CD4-positive, alpha-beta memory T cell (primary cell): ENCODE measurements at regions of chr11 and their contacts with region 1.

Region 1: GRCh38 chr11:10792398-10792975 is 16.2 kb downstream of the EIF4G2 start:
- DNase-seq: peak; percentile 71 to 81 (median 72)
- H3K4me3 ChIP-seq: no peak overlapping the region
- H3K4me3 Mint-ChIP-seq: peak overlapping the region in 3 of 8 donors; percentile 0 to 65 (median 58)
- H3K27ac ChIP-seq: no peak overlapping the region
- H3K27ac Mint-ChIP-seq: peak overlapping the region in 1 of 7 donors; percentile 21
- H3K4me1 ChIP-seq: peaks cover 28% of the 10 kb centered on the region
- H3K4me1 Mint-ChIP-seq: peaks cover 21 to 47% (median 33%) of the 10 kb centered on the region in 4 donors
- H3K27me3 ChIP-seq: no peaks in the 10 kb centered on the region
- H3K27me3 Mint-ChIP-seq: peaks cover 1 to 2% of the 10 kb centered on the region in 2 donors

Region 2: GRCh38 chr11:10770626-10771254 is 21.7 kb before region 1 on chr11:
- CTCF ChIA-PET with region 1: interaction called, 35 read pairs
- POLR2A ChIA-PET with region 1: interaction called, 4 read pairs
- intact Hi-C with region 1: no loop called
- DNase-seq: peak in 2 of 5 donors; percentile 5 to 12
- H3K4me3 ChIP-seq: no peak overlapping the region
- H3K4me3 Mint-ChIP-seq: no peak overlapping the region
- H3K27ac ChIP-seq: no peak overlapping the region
- H3K27ac Mint-ChIP-seq: peak overlapping the region in 1 of 7 donors; percentile 13
- H3K4me1 ChIP-seq: no peaks in the 10 kb centered on the region
- H3K4me1 Mint-ChIP-seq: no peaks in the 10 kb centered on the region
- H3K27me3 ChIP-seq: no peaks in the 10 kb centered on the region
- H3K27me3 Mint-ChIP-seq: no peaks in the 10 kb centered on the region

Region 3: DNA sequence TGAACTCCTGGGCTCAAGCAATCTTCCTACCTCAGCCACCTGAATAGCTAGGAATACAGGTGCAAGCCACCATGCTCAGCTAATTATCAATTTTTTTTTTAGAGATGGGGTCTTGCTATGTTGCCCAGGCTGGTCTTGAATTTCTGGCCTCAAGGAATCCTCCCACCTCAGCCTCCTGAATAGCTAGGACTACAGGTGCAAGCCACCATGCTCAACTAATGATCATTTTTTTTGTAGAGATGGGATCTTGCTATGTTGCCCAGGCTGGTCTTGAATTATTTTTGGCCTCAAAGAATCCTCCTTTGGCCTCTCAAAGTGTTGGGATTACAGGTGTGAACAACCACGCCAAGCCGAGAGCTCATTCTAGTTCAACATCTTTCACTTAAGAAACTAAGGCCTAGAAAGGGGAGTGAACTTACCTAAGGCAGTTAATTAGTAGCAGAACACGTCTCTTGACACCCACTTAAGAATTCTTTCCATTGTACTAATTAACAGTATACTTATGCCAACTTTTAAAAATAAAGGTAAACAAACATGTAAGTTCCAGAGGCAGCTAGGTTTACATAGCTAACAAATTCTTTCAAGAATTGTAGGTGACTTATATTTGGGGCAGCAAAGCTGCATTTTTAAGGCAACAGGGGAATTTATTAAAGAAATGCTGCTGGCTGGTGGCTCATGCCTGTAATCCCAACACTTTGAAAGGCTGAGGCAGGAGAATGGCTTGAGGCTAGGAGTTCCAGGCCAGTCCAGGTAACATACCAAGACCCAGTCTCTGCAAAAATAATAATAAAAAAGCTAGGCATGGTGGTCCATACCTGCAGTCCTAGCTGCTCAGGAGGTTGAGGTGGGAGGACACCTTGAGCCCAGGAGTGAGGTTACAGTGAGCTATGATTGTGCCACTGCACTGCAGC is 55.7 kb after region 1 on chr11:
- CTCF ChIA-PET with region 1: interaction called, 12 read pairs
- POLR2A ChIA-PET with region 1: no interaction called
- intact Hi-C with region 1: no loop called
- DNase-seq: no peak
- H3K4me3 ChIP-seq: no peak overlapping the region
- H3K4me3 Mint-ChIP-seq: no peak overlapping the region
- H3K27ac ChIP-seq: no peak overlapping the region
- H3K27ac Mint-ChIP-seq: no peak overlapping the region
- H3K4me1 ChIP-seq: no peaks in the 10 kb centered on the region
- H3K4me1 Mint-ChIP-seq: peaks cover 6 to 14% (median 13%) of the 10 kb centered on the region in 4 donors
- H3K27me3 ChIP-seq: no peaks in the 10 kb centered on the region
- H3K27me3 Mint-ChIP-seq: no peaks in the 10 kb centered on the region

Region 4: GRCh38 chr11:10906513-10906912 is 114.0 kb after region 1 on chr11:
- CTCF ChIA-PET with region 1: interaction called, 54 read pairs
- POLR2A ChIA-PET with region 1: interaction called, 4 read pairs
- intact Hi-C with region 1: no loop called
- DNase-seq: no peak
- H3K4me3 ChIP-seq: no peak overlapping the region
- H3K4me3 Mint-ChIP-seq: no peak overlapping the region
- H3K27ac ChIP-seq: no peak overlapping the region
- H3K27ac Mint-ChIP-seq: no peak overlapping the region
- H3K4me1 ChIP-seq: no peaks in the 10 kb centered on the region
- H3K4me1 Mint-ChIP-seq: no peaks in the 10 kb centered on the region
- H3K27me3 ChIP-seq: no peaks in the 10 kb centered on the region
- H3K27me3 Mint-ChIP-seq: peaks cover 1 to 16% of the 10 kb centered on the region in 2 donors

Region 5: DNA sequence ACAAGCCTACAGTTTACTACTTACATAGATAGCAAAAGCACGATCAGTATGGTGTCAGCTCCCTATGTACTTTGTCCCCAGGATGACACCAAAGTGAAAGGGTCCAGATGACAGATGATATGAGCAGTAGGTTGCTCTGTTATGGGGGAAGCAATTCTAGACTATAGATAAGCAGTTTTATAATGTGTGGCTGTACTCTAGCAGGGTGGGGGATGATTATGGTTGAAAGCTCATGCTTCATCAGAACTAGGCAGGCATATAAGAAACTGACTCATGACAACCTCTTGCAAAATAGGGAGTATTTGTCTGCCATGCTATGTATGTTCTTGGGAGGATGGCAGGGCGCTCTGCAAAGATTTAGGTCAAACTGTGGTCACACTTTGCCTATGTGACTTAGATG is 223.6 kb after region 1 on chr11:
- CTCF ChIA-PET with region 1: interaction called, 258 read pairs
- POLR2A ChIA-PET with region 1: no interaction called
- intact Hi-C with region 1: no loop called
- DNase-seq: no peak
- H3K4me3 ChIP-seq: no peak overlapping the region
- H3K4me3 Mint-ChIP-seq: no peak overlapping the region
- H3K27ac ChIP-seq: no peak overlapping the region
- H3K27ac Mint-ChIP-seq: no peak overlapping the region
- H3K4me1 ChIP-seq: no peaks in the 10 kb centered on the region
- H3K4me1 Mint-ChIP-seq: no peaks in the 10 kb centered on the region
- H3K27me3 ChIP-seq: no peaks in the 10 kb centered on the region
- H3K27me3 Mint-ChIP-seq: peaks cover 2 to 7% of the 10 kb centered on the region in 2 donors

Region 6: DNA sequence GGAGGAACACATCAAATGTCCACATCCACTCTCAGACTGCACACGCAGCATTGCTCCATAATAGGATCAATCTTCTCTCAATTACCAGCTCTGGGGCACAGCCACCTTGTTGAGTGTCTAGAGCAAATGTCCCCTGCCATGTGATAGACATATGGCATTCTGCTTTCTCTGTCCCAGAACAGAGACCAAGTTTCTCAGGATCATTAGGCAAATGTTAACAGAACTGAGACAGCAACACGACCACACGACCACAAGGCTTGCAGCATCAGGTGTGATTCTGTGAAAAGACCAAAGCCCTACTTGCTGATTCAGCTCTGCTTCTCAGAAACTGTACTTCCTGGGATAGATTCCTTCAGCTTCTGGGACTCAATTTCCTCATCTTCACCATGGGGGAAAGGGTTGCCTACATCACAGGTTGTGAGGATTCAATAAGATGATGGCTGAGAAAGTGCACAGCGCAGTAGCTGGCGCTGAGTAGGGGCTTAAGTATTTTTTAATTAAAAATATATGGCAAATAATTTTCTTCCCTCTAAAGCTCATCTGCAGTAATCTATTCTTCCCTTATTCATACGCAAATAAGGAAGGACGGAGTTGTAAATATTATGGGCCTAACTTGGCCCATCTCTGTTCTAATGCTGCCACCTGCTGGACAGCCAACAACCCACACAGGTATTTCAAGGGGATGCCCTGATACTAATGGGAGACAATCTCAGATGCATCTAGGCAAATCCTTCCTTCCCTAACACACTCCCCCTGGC is 995.0 kb after region 1 on chr11:
- CTCF ChIA-PET with region 1: interaction called, 15 read pairs
- POLR2A ChIA-PET with region 1: no interaction called
- intact Hi-C with region 1: loop called (anchors 1 kb)
- DNase-seq: peak; percentile 59 to 67 (median 61)
- H3K4me3 ChIP-seq: no peak overlapping the region
- H3K4me3 Mint-ChIP-seq: no peak overlapping the region
- H3K27ac ChIP-seq: no peak overlapping the region
- H3K27ac Mint-ChIP-seq: no peak overlapping the region
- H3K4me1 ChIP-seq: no peaks in the 10 kb centered on the region
- H3K4me1 Mint-ChIP-seq: peaks cover 0 to 1% (median 0%) of the 10 kb centered on the region in 4 donors
- H3K27me3 ChIP-seq: no peaks in the 10 kb centered on the region
- H3K27me3 Mint-ChIP-seq: peaks cover 0 to 7% of the 10 kb centered on the region in 2 donors